ENCODE measurements at regions of chr10 and their contacts with region 1.

Region 1: DNA sequence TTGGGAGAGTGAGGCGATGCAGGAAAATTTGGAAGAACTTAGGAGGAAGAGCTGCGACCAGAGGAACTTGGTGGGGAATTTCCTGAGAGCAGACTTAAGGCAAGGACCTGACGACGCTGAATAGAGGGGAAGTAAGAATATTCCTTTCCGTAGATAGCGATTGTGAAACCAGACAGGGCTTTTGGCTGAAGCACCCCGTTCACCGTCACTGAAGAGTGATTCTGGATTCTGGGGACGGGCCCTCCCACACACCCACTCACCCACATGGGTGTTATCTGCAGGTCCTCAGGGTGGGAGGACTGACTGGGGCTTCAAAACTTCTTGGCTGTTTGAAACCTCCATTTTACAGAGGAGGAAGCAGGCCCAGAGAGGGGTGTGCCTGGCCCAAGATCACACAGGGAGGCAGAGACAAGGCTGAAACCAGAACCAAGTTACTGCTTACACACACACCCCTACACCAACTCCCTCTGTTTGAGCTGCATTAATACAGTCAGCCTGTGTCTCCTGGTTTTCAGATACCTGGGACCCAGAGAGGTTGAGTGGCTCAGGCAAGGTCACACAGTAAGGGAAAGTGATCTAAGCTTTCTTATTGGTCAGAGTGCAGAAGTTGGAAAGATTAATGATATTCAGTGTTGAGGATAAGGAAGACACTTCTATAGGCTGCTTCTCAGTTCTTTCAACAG is 37.2 kb upstream of the CDH23 start:
- DNase-seq: no peak

Region 2: DNA sequence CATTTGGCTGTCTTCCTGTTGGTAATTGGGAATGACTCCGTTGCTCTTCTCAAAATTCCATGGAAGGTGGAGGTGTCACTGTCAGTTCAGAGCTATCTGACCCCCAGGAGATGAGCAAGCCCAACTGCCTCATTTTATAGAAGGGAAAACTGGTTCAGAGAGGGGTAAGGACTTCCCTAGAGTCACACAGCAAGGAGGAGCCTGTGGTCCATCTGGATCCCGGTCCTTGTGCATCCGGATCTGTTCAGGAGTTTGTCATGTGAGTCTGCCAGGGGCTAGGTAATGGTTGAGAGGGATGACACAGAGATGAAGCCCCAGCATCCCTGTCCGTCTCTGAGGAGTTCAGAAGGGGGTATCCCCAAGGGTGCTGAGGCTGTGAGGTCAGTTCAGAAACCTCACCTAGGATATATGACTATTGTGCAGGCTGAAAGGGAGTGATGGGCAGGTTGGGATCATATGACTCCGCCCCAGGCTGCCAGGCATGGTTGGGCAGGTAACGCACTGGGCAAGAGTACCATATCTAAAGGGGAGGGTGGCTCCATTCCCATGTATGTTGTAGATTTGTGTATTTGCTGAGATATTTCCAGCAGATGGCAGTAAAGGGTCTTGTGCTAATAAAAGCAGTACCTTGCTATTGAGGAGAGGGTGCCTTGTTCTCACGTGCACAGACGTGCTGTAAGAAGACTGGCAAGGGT is 56.5 kb before region 1 on chr10:
- intact Hi-C with region 1: no loop called
- DNase-seq: no peak

Region 3: DNA sequence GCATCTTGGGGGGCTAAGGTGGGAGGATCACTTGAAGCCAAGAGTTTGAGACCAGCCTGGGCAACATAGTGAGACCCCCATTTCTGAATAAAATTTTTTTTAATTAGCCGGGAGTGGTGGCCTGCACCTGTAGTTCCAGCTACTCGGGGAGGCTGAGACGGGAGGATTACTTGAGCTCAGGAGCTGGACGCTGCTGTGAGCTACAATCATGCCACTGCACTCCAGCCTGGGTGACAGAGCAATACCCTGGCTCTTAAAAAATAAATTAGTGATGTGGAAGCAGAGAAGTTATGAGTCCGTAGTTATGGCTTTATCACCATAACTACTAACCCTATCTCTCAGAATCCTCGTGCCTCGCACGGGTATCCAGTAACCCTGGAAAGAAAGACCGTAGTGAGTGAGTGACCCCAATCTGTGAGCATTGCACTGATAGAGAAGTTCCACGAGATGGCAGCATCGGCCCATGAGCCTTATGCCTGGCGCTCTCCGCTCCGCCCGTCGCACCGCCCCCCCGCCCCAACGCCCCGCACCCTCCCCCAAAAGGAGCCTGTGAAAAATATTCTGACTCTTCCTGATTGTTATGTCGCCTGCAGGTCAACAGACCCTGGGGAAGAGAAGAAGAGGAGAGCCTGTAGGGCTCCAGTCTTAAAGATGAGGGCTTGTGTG is 45.3 kb before region 1 on chr10:
- intact Hi-C with region 1: no loop called
- DNase-seq: peak; percentile 88

Region 4: GRCh38 chr10:71414359-71414758 is 54.9 kb after region 1 on chr10:
- intact Hi-C with region 1: loop called in 1 of 2 experiments (anchors 2 kb)
- DNase-seq: no peak

Region 5: DNA sequence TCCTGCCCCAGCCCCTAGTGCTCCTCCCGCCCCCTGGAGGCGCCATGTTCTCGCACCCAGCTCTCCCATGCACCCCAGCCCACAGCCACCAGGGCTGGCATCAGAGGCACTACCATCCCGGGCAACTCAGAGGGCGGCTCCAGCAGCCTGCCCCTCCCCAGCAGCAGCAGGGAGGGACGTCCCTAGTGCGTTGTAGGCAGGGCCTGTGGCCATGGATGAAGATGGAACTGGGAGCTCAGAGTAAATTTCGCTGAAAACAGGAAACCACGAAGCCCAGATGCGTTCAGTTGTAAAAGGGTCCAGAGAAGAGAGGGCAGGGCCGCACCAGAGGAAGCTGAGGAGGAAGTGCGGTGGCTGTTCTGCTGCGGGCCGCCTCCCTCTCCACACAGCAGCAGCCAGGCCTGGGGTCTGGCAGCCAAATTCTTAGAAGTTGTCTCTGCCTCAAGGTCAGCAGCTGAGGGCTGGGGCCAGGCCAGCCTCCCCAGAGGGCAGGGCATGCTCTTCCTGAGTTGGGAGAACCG is 389.2 kb after region 1 on chr10:
- intact Hi-C with region 1: no loop called
- DNase-seq: peak; percentile 93

Measured in posterior vena cava (tissue), 2 donors.